Right ventricle myocardium inferior (tissue), 1 donor: ENCODE measurements at regions of chr10 and their contacts with region 1.

Region 1: DNA sequence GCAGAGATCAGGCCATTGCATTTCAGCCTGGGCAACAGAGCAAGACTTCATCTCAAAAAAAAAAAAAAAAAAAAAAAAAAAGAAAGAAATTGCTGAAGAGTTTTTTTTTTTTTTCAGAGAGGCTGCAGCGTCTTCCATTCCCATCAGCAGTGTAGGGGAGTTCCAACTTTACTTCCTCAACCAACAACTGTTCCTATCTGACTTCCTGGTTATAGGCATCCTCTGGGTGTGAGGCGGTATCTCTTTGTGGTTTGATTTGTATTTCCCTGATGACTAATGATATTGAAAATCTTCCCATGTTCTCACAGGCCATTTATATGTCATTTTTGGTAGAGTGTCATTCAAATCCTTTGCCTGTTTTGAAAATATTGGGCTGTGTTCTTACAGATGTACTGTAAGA is 40.2 kb downstream of the PRTFDC1 start:
- DNase-seq: no peak
- ATAC-seq: peak; percentile 63

Region 2: GRCh38 chr10:24952707-24953645 is 40.8 kb after region 1 on chr10:
- intact Hi-C with region 1: loop called (anchors 5 kb)
- DNase-seq: peak; percentile 73
- ATAC-seq: peak; percentile 48

Region 3: DNA sequence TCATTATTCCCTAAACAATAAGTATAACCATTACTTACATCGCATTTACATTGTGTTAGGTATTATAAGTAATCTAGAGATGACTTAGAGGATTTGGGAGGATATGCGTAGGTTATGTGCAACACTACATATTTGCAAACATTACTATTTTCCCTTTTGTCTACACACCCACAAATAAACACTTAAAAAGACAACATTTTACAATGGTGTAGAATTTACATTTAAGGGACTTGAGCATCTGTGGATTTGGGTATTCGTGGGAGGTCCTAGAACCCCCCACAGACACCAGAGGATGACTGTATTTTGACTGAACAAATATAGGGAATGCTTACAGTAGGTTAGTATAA is 801.7 kb after region 1 on chr10:
- intact Hi-C with region 1: no loop called
- DNase-seq: no peak
- ATAC-seq: no peak